ENCODE measurements at regions of chr18 and their contacts with region 1.

Region 1: GRCh38 chr18:63979409-63979920 is 9.6 kb downstream of the SERPINB8 start:
- DNase-seq: peak; percentile 58
- H3K4me3 Mint-ChIP-seq: no peak overlapping the region
- H3K27ac Mint-ChIP-seq: no peak overlapping the region
- H3K4me1 Mint-ChIP-seq: peaks cover 16% of the 10 kb centered on the region
- H3K27me3 Mint-ChIP-seq: no peaks in the 10 kb centered on the region

Region 2: DNA sequence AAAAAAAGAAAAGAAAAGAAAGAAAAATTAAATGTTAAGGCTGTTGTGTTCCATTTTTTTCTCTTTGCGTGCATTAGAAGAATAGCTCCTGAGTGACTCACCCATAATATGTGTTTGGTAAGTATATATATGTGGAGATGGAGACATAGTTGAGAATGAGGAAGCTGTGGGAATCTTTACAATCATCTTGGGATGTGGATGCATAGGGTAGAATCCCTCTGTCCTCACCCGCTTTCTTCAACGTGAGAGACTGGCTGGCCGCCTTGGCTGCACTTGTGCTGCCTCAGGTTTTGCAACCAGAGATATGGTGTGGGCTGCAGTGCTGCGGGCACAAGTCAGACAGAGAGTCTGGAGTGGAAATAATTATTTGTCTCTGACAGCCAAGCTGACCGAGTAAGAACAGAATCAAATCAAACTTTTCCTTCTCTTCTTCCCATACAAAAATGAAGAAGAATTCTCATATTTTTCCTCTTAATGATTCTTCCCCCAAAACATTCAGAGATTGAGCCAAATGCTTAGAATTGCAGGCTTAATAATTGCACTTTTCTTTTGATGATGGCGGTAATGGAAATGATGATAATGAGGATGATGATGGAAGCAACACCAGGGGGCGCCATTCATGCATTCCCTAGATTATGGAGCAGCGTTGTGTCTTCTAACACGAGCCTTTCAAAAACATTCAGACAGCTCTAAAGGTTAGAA is 155.8 kb before region 1 on chr18:
- CTCF ChIA-PET with region 1: interaction called, 5 read pairs
- intact Hi-C with region 1: loop called (anchors 1 kb)
- DNase-seq: peak; percentile 60
- H3K4me3 Mint-ChIP-seq: no peak overlapping the region
- H3K27ac Mint-ChIP-seq: no peak overlapping the region
- H3K4me1 Mint-ChIP-seq: no peaks in the 10 kb centered on the region
- H3K27me3 Mint-ChIP-seq: peaks cover 5% of the 10 kb centered on the region

Region 3: DNA sequence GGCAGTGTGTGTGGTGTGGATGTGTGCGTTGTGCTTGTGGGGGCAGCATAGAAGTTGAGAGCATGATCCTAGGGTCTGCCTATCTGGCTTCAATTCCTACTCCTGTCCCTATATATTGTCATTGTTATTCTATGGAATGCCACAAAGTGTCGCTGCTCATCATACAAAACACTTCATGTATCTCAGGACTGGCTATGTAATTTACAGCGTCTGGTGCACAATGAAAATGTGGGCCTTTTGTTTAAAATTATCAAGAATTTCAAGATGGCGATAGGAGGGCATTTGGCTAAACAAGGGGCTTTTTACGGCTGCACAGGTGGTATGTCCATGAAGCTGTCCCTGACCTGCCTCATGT is 88.5 kb before region 1 on chr18:
- CTCF ChIA-PET with region 1: no interaction called
- intact Hi-C with region 1: loop called (anchors 1 kb)
- DNase-seq: no peak
- H3K4me3 Mint-ChIP-seq: no peak overlapping the region
- H3K27ac Mint-ChIP-seq: no peak overlapping the region
- H3K4me1 Mint-ChIP-seq: peaks cover 4% of the 10 kb centered on the region
- H3K27me3 Mint-ChIP-seq: peaks cover 12% of the 10 kb centered on the region

Region 4: GRCh38 chr18:63963615-63964256 is 15.7 kb before region 1 on chr18:
- CTCF ChIA-PET with region 1: interaction called, 55 read pairs
- intact Hi-C with region 1: loop called (anchors 1 kb)
- DNase-seq: peak; percentile 70
- H3K4me3 Mint-ChIP-seq: no peak overlapping the region
- H3K27ac Mint-ChIP-seq: no peak overlapping the region
- H3K4me1 Mint-ChIP-seq: peaks cover 16% of the 10 kb centered on the region
- H3K27me3 Mint-ChIP-seq: peaks cover 11% of the 10 kb centered on the region

Region 5: DNA sequence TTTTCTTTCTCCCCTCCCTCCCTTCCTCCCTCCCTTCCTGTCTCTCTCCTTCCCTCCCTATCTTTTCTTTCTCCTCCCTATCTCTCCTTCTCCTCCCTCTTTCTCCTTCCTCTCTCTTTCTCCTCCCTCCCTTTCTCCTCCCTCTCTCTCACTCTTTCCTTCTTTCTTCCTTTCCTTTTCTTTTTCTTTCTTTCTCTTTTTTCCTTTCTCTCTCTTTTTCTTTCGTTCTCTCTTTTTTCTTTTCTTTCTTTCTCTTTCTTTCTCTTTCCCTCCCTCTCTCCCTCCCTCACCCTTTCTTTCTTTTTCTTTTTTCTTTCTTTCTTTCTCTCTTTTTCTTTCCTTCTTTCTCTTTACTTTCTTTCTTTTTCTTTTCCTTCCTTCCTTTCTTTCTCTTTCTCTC is 339.1 kb after region 1 on chr18:
- CTCF ChIA-PET with region 1: no interaction called
- intact Hi-C with region 1: no loop called
- DNase-seq: no peak
- H3K4me3 Mint-ChIP-seq: no peak overlapping the region
- H3K27ac Mint-ChIP-seq: no peak overlapping the region
- H3K4me1 Mint-ChIP-seq: no peaks in the 10 kb centered on the region
- H3K27me3 Mint-ChIP-seq: no peaks in the 10 kb centered on the region

Region 6: DNA sequence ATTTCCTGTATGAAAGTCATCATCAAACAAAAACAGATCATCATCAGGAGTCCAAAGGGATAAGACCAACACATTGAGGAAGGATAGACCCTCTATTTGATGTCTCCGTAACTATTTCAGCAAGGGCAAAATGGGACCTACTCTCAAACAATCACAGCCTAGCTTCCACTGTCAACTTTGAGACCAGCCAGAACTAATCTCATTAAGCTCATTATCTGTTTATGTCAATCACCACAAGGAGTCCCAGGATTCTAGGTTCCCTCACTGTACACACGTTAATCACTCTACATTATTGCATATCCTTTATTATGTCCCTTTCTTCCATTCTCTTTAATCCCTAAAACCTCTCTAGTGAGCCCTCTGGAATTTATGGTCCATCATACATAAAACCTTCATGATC is 539.7 kb after region 1 on chr18:
- CTCF ChIA-PET with region 1: no interaction called
- intact Hi-C with region 1: no loop called
- DNase-seq: no peak
- H3K4me3 Mint-ChIP-seq: no peak overlapping the region
- H3K27ac Mint-ChIP-seq: no peak overlapping the region
- H3K4me1 Mint-ChIP-seq: no peaks in the 10 kb centered on the region
- H3K27me3 Mint-ChIP-seq: no peaks in the 10 kb centered on the region